Activated CD4-positive, alpha-beta T cell treated with anti-CD3 and anti-CD28 coated beads for 36 hours (primary cell): ENCODE measurements at regions of chr12 and their contacts with region 1.

Region 1: DNA sequence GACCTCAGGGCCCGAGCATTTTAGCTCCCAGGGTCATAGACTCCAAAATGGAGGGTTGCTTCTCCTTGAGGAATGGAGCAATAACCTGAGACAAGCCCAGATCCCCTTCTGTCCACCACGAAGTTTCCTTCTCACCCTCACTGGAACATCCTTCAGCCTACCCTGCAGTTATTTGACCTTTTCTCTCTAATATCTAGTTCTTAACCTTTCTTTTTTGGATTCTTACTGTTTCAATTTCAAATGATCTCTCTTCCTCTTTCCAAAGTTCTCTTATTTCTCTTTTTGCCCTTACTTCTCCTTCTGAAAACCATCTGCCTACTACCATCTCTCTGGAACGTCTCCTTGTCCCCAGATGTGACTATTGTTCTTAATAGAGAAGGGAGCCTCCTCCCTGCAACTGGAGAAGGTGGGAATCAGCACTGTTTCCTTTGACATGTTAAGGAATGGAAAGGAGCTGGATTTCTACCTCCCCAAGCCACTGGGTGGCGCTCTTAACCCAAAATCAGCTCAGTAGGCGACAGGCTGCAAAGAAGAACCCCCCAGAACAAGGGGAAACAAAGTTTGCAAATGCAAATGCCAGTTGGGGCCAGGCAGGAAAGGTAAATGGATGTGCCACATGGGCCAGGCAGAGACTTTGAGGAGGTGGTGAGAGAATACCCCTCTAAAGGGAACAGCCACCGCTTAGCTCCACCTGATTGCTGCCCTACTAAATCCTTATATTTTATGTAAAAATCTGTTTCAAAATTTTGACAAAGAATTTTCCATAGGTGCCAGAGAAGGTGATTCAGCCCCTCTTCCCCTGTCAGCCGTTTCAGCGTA is 22.4 kb upstream of the PDE1B start:
- DNase-seq: peak; percentile 73
- ATAC-seq: no peak
- H3K4me3 Mint-ChIP-seq: no peak overlapping the region
- H3K27ac Mint-ChIP-seq: peak overlapping the region; percentile 14
- H3K4me1 Mint-ChIP-seq: peaks cover 28% of the 10 kb centered on the region
- H3K27me3 Mint-ChIP-seq: no peaks in the 10 kb centered on the region

Region 2: DNA sequence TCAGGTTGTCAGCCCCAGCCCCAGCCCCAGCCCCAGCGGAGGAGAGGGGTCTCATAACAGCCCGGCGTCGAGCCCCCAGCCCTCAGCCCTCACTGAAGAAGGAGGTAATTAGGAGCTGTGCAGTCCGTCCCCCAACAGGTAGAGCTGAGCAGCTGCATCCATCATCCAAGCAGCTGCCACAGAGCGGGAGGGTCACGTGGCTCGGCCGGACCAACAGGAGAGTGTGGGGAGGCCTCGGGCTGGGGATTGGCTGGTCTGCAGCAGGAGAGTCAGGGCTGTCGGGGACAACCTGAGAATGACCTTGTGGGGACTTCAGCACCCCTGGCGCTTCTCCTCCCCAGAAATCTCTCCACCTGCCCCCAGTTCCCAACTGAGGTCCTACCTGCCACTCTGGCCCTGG is 367.9 kb before region 1 on chr12:
- CTCF ChIA-PET with region 1: no interaction called
- POLR2A ChIA-PET with region 1: no interaction called
- intact Hi-C with region 1: no loop called
- DNase-seq: peak; percentile 62
- ATAC-seq: peak; percentile 94
- H3K4me3 Mint-ChIP-seq: no peak overlapping the region
- H3K27ac Mint-ChIP-seq: no peak overlapping the region
- H3K4me1 Mint-ChIP-seq: no peaks in the 10 kb centered on the region
- H3K27me3 Mint-ChIP-seq: peaks cover 34% of the 10 kb centered on the region

Region 3: GRCh38 chr12:54273981-54274380 is 253.0 kb before region 1 on chr12:
- CTCF ChIA-PET with region 1: no interaction called
- POLR2A ChIA-PET with region 1: no interaction called
- intact Hi-C with region 1: loop called in 1 of 2 experiments (anchors 5 kb)
- DNase-seq: no peak
- ATAC-seq: no peak
- H3K4me3 Mint-ChIP-seq: no peak overlapping the region
- H3K27ac Mint-ChIP-seq: no peak overlapping the region
- H3K4me1 Mint-ChIP-seq: peaks cover 73% of the 10 kb centered on the region
- H3K27me3 Mint-ChIP-seq: no peaks in the 10 kb centered on the region

Region 4: DNA sequence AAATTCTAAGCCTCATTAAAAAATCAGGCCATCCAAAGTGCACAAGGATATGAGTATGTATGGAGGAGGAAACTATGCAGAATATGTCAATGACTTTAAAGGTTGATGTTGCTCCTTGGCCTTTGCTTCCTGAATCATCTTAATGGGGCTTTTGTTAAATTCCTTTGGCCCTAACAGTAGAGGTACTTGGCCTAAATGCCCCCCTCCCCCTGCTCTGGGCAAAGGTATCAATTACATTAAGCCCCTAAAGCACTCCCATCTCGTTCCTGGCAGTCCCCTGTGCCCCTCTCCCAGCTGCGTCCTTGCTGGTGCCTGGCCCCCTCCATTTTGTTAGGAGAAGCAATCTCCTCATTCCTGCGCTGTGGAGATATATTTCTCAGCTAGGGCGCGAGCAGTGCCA is 197.3 kb before region 1 on chr12:
- CTCF ChIA-PET with region 1: no interaction called
- POLR2A ChIA-PET with region 1: no interaction called
- intact Hi-C with region 1: no loop called
- DNase-seq: no peak
- ATAC-seq: no peak
- H3K4me3 Mint-ChIP-seq: no peak overlapping the region
- H3K27ac Mint-ChIP-seq: peak overlapping the region; percentile 42
- H3K4me1 Mint-ChIP-seq: peaks cover 57% of the 10 kb centered on the region
- H3K27me3 Mint-ChIP-seq: no peaks in the 10 kb centered on the region

Region 5: DNA sequence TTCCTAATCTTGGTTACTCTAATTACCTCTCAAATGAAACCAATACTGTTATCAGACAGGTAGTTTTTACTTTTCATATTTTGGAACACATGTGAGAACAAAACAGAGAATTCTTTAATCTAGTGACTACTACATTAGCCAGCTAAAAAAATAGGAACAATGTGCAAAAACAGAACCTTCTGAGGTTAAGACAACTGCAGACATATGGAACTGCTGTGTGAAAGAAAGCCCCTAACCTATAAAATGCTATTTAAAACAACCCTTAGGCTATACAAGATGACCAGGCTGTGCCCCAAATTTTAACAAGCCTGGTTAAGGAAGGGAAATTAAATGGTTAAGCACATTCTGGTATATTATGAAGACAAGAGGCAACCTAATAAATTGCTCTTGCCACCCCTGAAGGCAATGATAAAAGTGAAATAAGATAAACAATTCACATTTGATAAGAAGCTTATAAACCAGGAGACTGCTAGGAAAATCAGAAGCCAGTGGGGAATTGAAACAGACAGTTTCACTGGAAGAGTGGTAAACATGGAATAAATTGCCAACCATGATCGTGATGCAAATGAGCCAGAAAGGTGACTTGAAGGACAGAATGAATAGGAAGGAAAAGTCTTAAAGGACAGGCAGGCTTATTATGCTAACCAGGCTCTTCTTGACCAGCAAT is 61.0 kb before region 1 on chr12:
- CTCF ChIA-PET with region 1: no interaction called
- POLR2A ChIA-PET with region 1: no interaction called
- intact Hi-C with region 1: no loop called
- DNase-seq: no peak
- ATAC-seq: no peak
- H3K4me3 Mint-ChIP-seq: no peak overlapping the region
- H3K27ac Mint-ChIP-seq: no peak overlapping the region
- H3K4me1 Mint-ChIP-seq: peaks cover 7% of the 10 kb centered on the region
- H3K27me3 Mint-ChIP-seq: peaks cover 2% of the 10 kb centered on the region

Region 6: GRCh38 chr12:54541751-54542290 is 14.8 kb after region 1 on chr12:
- CTCF ChIA-PET with region 1: interaction called, 21 read pairs
- POLR2A ChIA-PET with region 1: interaction called, 3 read pairs
- intact Hi-C with region 1: no loop called
- DNase-seq: no peak
- ATAC-seq: no peak
- H3K4me3 Mint-ChIP-seq: no peak overlapping the region
- H3K27ac Mint-ChIP-seq: peak overlapping the region; percentile 15
- H3K4me1 Mint-ChIP-seq: peaks cover 7% of the 10 kb centered on the region
- H3K27me3 Mint-ChIP-seq: no peaks in the 10 kb centered on the region

Region 7: GRCh38 chr12:54560374-54560858 is 33.4 kb after region 1 on chr12:
- CTCF ChIA-PET with region 1: interaction called, 16 read pairs
- POLR2A ChIA-PET with region 1: no interaction called
- intact Hi-C with region 1: loop called in 1 of 2 experiments (anchors 1 kb)
- DNase-seq: peak; percentile 95
- ATAC-seq: peak; percentile 100
- H3K4me3 Mint-ChIP-seq: peak overlapping the region; percentile 66
- H3K27ac Mint-ChIP-seq: peak overlapping the region; percentile 93
- H3K4me1 Mint-ChIP-seq: peaks cover 33% of the 10 kb centered on the region
- H3K27me3 Mint-ChIP-seq: no peaks in the 10 kb centered on the region

Region 8: GRCh38 chr12:54596526-54596946 is 69.5 kb after region 1 on chr12:
- CTCF ChIA-PET with region 1: interaction called, 6 read pairs
- POLR2A ChIA-PET with region 1: no interaction called
- intact Hi-C with region 1: loop called in 1 of 2 experiments (anchors 5 kb)
- DNase-seq: peak; percentile 75
- ATAC-seq: peak; percentile 73
- H3K4me3 Mint-ChIP-seq: no peak overlapping the region
- H3K27ac Mint-ChIP-seq: no peak overlapping the region
- H3K4me1 Mint-ChIP-seq: peaks cover 3% of the 10 kb centered on the region
- H3K27me3 Mint-ChIP-seq: peaks cover 8% of the 10 kb centered on the region

Region 9: DNA sequence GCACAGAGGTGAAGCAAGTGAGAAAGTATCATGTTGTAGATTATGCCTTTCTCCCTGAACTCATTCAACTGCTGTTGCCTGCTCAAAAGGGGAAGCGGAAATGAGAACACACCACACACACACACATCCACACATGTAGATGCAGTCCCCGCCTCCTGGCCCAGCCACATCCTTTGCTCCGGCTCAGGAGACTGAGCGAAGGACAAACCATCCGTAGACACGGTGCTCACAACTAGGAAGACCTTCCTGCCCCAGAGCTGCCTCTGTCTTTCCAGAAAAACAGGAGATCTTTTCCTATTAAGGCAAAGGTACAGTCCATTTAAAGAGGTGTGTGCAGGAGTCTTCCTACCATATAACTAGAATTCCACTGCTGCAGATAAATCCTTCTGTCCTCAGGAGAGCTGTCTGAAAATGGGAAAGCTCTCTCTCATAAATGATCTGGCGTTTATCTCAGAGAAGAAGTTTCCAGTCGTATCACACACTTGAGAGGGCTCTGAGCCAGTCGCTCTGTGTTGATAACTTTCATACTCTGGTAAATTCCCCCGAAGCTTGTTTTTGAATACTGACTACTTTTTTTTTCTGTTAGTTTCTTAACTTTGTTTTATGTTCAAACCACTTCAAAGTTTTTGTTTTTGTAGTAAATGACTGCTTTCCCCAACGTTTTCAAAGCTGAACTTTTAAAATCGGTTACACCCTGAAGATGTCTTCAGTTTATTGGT is 457.8 kb after region 1 on chr12 and contains the start of gene TESPA1:
- CTCF ChIA-PET with region 1: no interaction called
- POLR2A ChIA-PET with region 1: no interaction called
- intact Hi-C with region 1: loop called in 1 of 2 experiments (anchors 10 kb)
- DNase-seq: peak; percentile 92
- ATAC-seq: peak; percentile 87
- H3K4me3 Mint-ChIP-seq: peak within 1 kb of the TSS; percentile 78
- H3K27ac Mint-ChIP-seq: peak within 1 kb of the TSS; percentile 95
- H3K4me1 Mint-ChIP-seq: peaks cover 64% of the 10 kb centered on the region
- H3K27me3 Mint-ChIP-seq: no peaks in the 10 kb centered on the region
- total RNA-seq, gene TESPA1: 81.0 to 107 TPM